Natural killer cell (primary cell): ENCODE measurements at regions of chr12 and their contacts with region 1.

Region 1: GRCh38 chr12:49358483-49359141 is 8.7 kb upstream of the SPATS2 start:
- DNase-seq: peak; percentile 29 to 88
- ATAC-seq: peak; percentile 90 to 98 (median 97)
- H3K4me3 ChIP-seq: no peak overlapping the region
- H3K4me3 Mint-ChIP-seq: no peak overlapping the region
- H3K27ac ChIP-seq: no peak overlapping the region
- H3K27ac Mint-ChIP-seq: no peak overlapping the region
- H3K4me1 ChIP-seq: no peaks in the 10 kb centered on the region
- H3K4me1 Mint-ChIP-seq: peaks cover 7% of the 10 kb centered on the region in 2 donors
- H3K27me3 ChIP-seq: no peaks in the 10 kb centered on the region
- H3K27me3 Mint-ChIP-seq: peaks cover 16 to 33% of the 10 kb centered on the region in 2 donors
- CTCF ChIP-seq: peak; percentile 69

Region 2: DNA sequence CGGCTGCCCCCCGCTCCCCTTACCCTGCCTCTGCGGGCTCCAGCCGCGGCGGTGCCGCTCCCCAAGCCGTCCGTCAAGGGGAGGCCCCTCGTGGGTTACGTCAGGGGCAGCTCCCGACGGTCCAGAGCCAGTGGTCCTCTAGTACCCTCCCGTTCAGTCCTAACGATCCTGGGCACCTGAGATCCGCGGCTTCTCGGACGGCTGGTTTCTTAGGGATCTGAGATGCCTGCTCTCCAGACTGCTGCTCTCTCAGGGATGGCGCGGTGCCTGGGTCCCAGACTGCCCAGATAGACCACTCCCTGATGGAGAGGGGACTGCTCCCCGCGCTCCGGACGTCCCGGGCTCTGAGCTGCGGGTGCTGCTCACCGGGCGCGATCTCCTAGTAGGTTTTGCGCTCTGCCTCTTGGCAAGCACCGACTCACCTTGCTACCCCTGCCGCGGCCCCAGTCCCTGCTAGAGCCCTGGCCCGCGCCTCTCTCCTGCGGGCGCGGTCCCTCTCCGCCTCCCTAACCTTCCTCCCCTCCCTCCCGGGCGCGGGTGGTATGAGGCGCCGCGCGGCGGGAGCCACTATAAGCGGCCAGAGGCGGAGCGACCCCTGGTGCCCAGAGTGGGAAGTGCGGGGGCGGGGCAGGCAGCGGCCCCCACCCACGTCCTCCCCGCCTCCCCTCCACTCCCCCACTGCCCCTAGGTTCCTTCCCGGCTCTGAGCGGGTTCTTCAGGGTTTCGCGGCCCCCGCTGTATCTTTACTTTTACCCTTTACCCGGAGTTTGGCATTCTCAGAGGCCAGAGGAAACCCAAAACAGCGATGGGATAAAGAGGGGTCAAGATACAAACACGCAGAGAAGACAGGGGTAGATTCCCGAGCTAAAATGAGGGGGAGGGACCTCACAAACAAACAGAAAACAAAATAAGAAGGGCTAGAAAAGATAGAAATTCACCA is 21.7 kb before region 1 on chr12 and contains the start of gene C1QL4:
- intact Hi-C with region 1: no loop called
- DNase-seq: peak; percentile 90 to 91
- ATAC-seq: peak; percentile 96 to 99 (median 98)
- H3K4me3 ChIP-seq: peak within 1 kb of the TSS; percentile 0
- H3K4me3 Mint-ChIP-seq: peak within 1 kb of the TSS; percentile 67
- H3K27ac ChIP-seq: no peak within 1 kb of the TSS
- H3K27ac Mint-ChIP-seq: peak within 1 kb of the TSS in 1 of 2 donors; percentile 2
- H3K4me1 ChIP-seq: peaks cover 29% of the 10 kb centered on the region
- H3K4me1 Mint-ChIP-seq: peaks cover 10 to 26% of the 10 kb centered on the region in 2 donors
- H3K27me3 ChIP-seq: peaks cover 39% of the 10 kb centered on the region
- H3K27me3 Mint-ChIP-seq: peaks cover 68 to 72% of the 10 kb centered on the region in 2 donors
- CTCF ChIP-seq: peak; percentile 98
- total RNA-seq, gene C1QL4: not detected

Region 3: DNA sequence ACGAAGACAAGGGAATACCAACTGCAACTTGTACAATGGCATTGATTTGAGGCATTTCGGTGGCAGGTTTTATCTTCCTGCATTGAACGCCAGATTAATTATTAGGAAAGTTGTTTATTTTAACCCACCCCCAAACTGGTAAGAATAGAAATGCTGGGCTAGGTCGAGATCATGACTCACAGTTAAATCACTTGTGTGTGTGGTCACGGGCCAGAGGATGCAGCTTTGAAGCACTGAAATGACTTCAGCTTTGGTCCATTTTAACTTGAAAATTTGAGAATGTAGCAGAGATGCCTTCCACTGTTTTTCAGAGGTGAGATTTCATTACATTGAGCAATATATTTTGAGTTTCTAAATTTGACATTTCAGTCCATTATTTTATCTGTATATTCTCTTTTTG is 156.7 kb after region 1 on chr12:
- intact Hi-C with region 1: loop called (anchors 1 kb)
- DNase-seq: no peak
- ATAC-seq: no peak
- H3K4me3 ChIP-seq: no peak overlapping the region
- H3K4me3 Mint-ChIP-seq: no peak overlapping the region
- H3K27ac ChIP-seq: no peak overlapping the region
- H3K27ac Mint-ChIP-seq: no peak overlapping the region
- H3K4me1 ChIP-seq: no peaks in the 10 kb centered on the region
- H3K4me1 Mint-ChIP-seq: no peaks in the 10 kb centered on the region
- H3K27me3 ChIP-seq: no peaks in the 10 kb centered on the region
- H3K27me3 Mint-ChIP-seq: no peaks in the 10 kb centered on the region
- CTCF ChIP-seq: no peak

Region 4: GRCh38 chr12:49580572-49581535 is 222.2 kb after region 1 on chr12:
- intact Hi-C with region 1: loop called (anchors 1 kb)
- DNase-seq: peak; percentile 35 to 74
- ATAC-seq: peak; percentile 59 to 80 (median 79)
- H3K4me3 ChIP-seq: no peak overlapping the region
- H3K4me3 Mint-ChIP-seq: no peak overlapping the region
- H3K27ac ChIP-seq: no peak overlapping the region
- H3K27ac Mint-ChIP-seq: no peak overlapping the region
- H3K4me1 ChIP-seq: no peaks in the 10 kb centered on the region
- H3K4me1 Mint-ChIP-seq: peaks cover 0 to 18% of the 10 kb centered on the region in 2 donors
- H3K27me3 ChIP-seq: no peaks in the 10 kb centered on the region
- H3K27me3 Mint-ChIP-seq: no peaks in the 10 kb centered on the region
- CTCF ChIP-seq: peak; percentile 46

Region 5: GRCh38 chr12:50066433-50066832 is 707.8 kb after region 1 on chr12:
- intact Hi-C with region 1: no loop called
- DNase-seq: no peak
- ATAC-seq: no peak
- H3K4me3 ChIP-seq: no peak overlapping the region
- H3K4me3 Mint-ChIP-seq: no peak overlapping the region
- H3K27ac ChIP-seq: no peak overlapping the region
- H3K27ac Mint-ChIP-seq: no peak overlapping the region
- H3K4me1 ChIP-seq: peaks cover 6% of the 10 kb centered on the region
- H3K4me1 Mint-ChIP-seq: peaks cover 0 to 6% of the 10 kb centered on the region in 2 donors
- H3K27me3 ChIP-seq: no peaks in the 10 kb centered on the region
- H3K27me3 Mint-ChIP-seq: peaks cover 9 to 11% of the 10 kb centered on the region in 2 donors
- CTCF ChIP-seq: no peak